ENCODE measurements at regions of chr9 and their contacts with region 1.

Region 1: GRCh38 chr9:87336914-87337333 is 160.7 kb upstream of the DAPK1 start:
- DNase-seq: peak in 4 of 5 donors; percentile 3 to 27 (median 8)
- H3K4me3 ChIP-seq: no peak overlapping the region
- H3K4me3 Mint-ChIP-seq: peak overlapping the region; percentile 57 to 90 (median 83)
- H3K27ac ChIP-seq: no peak overlapping the region
- H3K27ac Mint-ChIP-seq: no peak overlapping the region
- H3K4me1 ChIP-seq: peaks cover 7% of the 10 kb centered on the region
- H3K4me1 Mint-ChIP-seq: peaks cover 6 to 12% (median 11%) of the 10 kb centered on the region in 4 donors
- H3K27me3 ChIP-seq: peaks cover 3% of the 10 kb centered on the region
- H3K27me3 Mint-ChIP-seq: peaks cover 20 to 36% of the 10 kb centered on the region in 2 donors

Region 2: GRCh38 chr9:87640385-87640795 is 303.5 kb after region 1 on chr9:
- CTCF ChIA-PET with region 1: no interaction called
- POLR2A ChIA-PET with region 1: no interaction called
- intact Hi-C with region 1: no loop called
- DNase-seq: no peak
- H3K4me3 ChIP-seq: no peak overlapping the region
- H3K4me3 Mint-ChIP-seq: no peak overlapping the region
- H3K27ac ChIP-seq: no peak overlapping the region
- H3K27ac Mint-ChIP-seq: no peak overlapping the region
- H3K4me1 ChIP-seq: no peaks in the 10 kb centered on the region
- H3K4me1 Mint-ChIP-seq: no peaks in the 10 kb centered on the region
- H3K27me3 ChIP-seq: no peaks in the 10 kb centered on the region
- H3K27me3 Mint-ChIP-seq: peaks cover 0 to 6% of the 10 kb centered on the region in 2 donors

Region 3: GRCh38 chr9:87662808-87663528 is 326.0 kb after region 1 on chr9:
- CTCF ChIA-PET with region 1: no interaction called
- POLR2A ChIA-PET with region 1: no interaction called
- intact Hi-C with region 1: loop called (anchors 2 kb)
- DNase-seq: peak in 1 of 5 donors; percentile 6
- H3K4me3 ChIP-seq: no peak overlapping the region
- H3K4me3 Mint-ChIP-seq: no peak overlapping the region
- H3K27ac ChIP-seq: no peak overlapping the region
- H3K27ac Mint-ChIP-seq: no peak overlapping the region
- H3K4me1 ChIP-seq: no peaks in the 10 kb centered on the region
- H3K4me1 Mint-ChIP-seq: peaks cover 0 to 1% (median 0%) of the 10 kb centered on the region in 4 donors
- H3K27me3 ChIP-seq: no peaks in the 10 kb centered on the region
- H3K27me3 Mint-ChIP-seq: peaks cover 7 to 11% of the 10 kb centered on the region in 2 donors

Region 4: GRCh38 chr9:88578121-88579054 is 1241.5 kb after region 1 on chr9:
- CTCF ChIA-PET with region 1: no interaction called
- POLR2A ChIA-PET with region 1: no interaction called
- intact Hi-C with region 1: loop called (anchors 5 kb)
- DNase-seq: peak; percentile 35 to 48 (median 43)
- H3K4me3 ChIP-seq: no peak overlapping the region
- H3K4me3 Mint-ChIP-seq: peak overlapping the region in 7 of 8 donors; percentile 6 to 76 (median 61)
- H3K27ac ChIP-seq: no peak overlapping the region
- H3K27ac Mint-ChIP-seq: peak overlapping the region in 1 of 7 donors; percentile 57
- H3K4me1 ChIP-seq: peaks cover 7% of the 10 kb centered on the region
- H3K4me1 Mint-ChIP-seq: peaks cover 0 to 3% (median 2%) of the 10 kb centered on the region in 4 donors
- H3K27me3 ChIP-seq: no peaks in the 10 kb centered on the region
- H3K27me3 Mint-ChIP-seq: peaks cover 10 to 15% of the 10 kb centered on the region in 2 donors

Measured in CD4-positive, alpha-beta memory T cell (primary cell).